Keratinocyte (primary cell): ENCODE measurements at regions of chr3 and their contacts with region 1.

Region 1: GRCh38 chr3:42264399-42265058 is 1.5 kb downstream of the CCK start:
- DNase-seq: peak; percentile 25
- H3K4me3 ChIP-seq: peak overlapping the region in 2 of 3 experiments; percentile 47 to 48
- H3K27ac ChIP-seq: no peak overlapping the region
- H3K4me1 ChIP-seq: peaks cover 31% of the 10 kb centered on the region
- H3K27me3 ChIP-seq: peaks cover 42% of the 10 kb centered on the region
- CTCF ChIP-seq: peak in 1 of 3 experiments; percentile 11

Region 2: DNA sequence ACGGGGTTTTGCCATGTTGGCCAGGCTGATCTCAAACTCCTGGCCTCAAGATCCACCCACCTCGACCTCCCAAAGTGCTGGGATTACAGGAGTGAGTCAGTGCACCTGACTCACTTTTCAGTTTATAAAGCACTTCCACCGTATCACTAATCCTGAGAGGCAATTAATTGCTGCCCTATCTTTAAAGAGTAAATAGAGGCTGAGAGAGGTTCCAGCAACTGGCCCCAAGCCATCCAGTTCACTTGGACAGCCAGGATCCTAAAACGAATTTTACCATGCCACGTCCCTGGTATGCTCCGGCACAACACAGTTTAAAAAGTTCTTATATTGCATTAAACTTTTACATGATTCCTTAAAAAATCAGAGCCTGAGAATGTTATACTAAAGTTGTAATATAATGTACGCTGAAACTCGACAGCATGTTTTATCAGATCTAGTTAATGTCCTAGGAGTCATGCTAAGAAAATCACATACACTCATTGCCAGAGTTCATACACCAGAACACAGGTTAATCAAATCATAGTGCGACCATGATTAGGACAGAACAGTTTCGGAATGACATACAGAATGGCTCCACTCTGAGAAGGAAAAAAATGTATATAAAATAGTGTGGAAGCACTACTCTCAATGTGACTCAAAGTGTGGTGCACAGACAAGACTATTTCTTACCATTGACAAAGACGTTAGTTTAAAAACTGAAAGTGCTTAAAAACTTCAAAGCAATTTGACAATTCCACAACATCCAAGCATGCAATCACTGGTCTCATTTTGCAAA is 428.0 kb before region 1 on chr3:
- dilution Hi-C with region 1: no loop called
- DNase-seq: no peak
- H3K4me3 ChIP-seq: no peak overlapping the region
- H3K27ac ChIP-seq: no peak overlapping the region
- H3K4me1 ChIP-seq: no peaks in the 10 kb centered on the region
- H3K27me3 ChIP-seq: no peaks in the 10 kb centered on the region
- CTCF ChIP-seq: no peak

Region 3: DNA sequence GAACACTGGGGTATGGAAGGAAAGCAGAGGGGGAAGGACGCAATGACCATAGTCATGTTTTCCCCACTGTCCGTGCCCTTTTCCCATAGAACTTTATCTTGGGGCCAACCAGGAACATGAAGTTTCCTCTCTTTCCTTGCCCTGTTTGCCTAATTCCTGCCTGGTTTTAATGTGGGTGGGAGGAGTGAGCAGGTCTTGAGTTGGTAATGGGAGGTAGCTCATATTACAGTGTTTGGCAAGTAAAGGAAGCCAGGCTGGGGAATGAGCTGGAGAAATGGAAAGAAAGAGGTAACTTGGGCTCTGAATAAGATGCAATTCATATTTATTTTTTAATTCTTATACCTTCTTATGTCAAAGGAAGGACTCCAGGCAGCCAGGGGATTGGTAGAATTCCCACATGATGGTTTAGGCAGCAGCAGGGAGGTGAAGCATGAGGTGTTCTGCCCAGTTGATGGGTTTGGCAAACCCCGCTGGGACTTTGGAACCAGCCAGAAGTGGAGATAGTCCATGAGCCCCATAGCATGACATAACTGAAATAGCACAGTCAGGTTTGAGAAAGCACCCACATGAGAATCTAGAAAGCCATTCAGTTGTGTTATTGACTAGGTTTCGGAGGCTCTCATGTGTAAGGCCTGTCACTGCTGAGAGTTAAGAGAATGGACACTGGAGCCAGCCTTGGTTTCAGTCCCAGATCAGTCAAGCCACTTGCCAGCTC is 58.6 kb before region 1 on chr3:
- dilution Hi-C with region 1: no loop called
- DNase-seq: no peak
- H3K4me3 ChIP-seq: no peak overlapping the region
- H3K27ac ChIP-seq: no peak overlapping the region
- H3K4me1 ChIP-seq: no peaks in the 10 kb centered on the region
- H3K27me3 ChIP-seq: no peaks in the 10 kb centered on the region
- CTCF ChIP-seq: no peak

Region 4: GRCh38 chr3:42369304-42369703 is 104.8 kb after region 1 on chr3:
- dilution Hi-C with region 1: loop called (anchors 25 kb)
- DNase-seq: no peak
- H3K4me3 ChIP-seq: no peak overlapping the region
- H3K27ac ChIP-seq: no peak overlapping the region
- H3K4me1 ChIP-seq: no peaks in the 10 kb centered on the region
- H3K27me3 ChIP-seq: peaks cover 24% of the 10 kb centered on the region
- CTCF ChIP-seq: no peak

Region 5: GRCh38 chr3:42443819-42444436 is 179.4 kb after region 1 on chr3:
- dilution Hi-C with region 1: loop called (anchors 25 kb)
- DNase-seq: peak; percentile 17
- H3K4me3 ChIP-seq: no peak overlapping the region
- H3K27ac ChIP-seq: no peak overlapping the region
- H3K4me1 ChIP-seq: no peaks in the 10 kb centered on the region
- H3K27me3 ChIP-seq: peaks cover 4% of the 10 kb centered on the region
- CTCF ChIP-seq: peak; percentile 96 to 99 (median 97)